Ascending aorta (tissue), 2 donors: ENCODE measurements at regions of chr14 and their contacts with region 1.

Region 1: DNA sequence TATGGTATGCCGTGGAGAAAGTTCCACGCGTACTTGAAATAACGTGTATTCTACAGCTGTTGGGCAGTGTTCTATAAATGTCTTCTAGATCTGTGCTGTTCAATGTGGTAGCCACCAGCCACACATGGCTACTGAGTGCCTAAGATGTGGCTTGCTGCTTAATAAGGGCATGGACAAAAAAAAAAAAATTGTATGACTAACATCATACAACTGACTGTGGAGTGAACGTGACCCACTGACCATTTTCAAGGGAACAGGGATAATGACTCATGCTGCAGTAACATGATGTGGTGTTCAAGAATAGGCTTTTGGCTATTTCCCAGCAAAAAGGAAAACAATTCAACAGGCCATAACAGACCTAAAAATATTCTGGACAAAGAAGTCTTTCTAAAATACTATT is 13.0 kb downstream of the ATG14 start:
- DNase-seq: peak; percentile 28 to 82
- H3K4me3 ChIP-seq: no peak overlapping the region
- H3K27ac ChIP-seq: peak overlapping the region; percentile 44 to 84
- H3K4me1 ChIP-seq: peaks cover 4 to 26% of the 10 kb centered on the region in 2 donors
- H3K27me3 ChIP-seq: no peaks in the 10 kb centered on the region
- CTCF ChIP-seq: no peak

Region 2: GRCh38 chr14:55383039-55383438 is 15.6 kb before region 1 on chr14:
- intact Hi-C with region 1: loop called (anchors 2 kb)
- DNase-seq: peak; percentile 39 to 85
- H3K4me3 ChIP-seq: peak overlapping the region in 1 of 2 donors; percentile 1
- H3K27ac ChIP-seq: peak overlapping the region; percentile 64 to 86
- H3K4me1 ChIP-seq: peaks cover 15 to 20% of the 10 kb centered on the region in 2 donors
- H3K27me3 ChIP-seq: no peaks in the 10 kb centered on the region
- CTCF ChIP-seq: no peak